Ascending aorta (tissue), 2 donors: ENCODE measurements at regions of chr17 and their contacts with region 1.

Region 1: GRCh38 chr17:55735731-55736405 is 13.2 kb upstream of the TMEM100 start:
- DNase-seq: peak in 1 of 2 donors; percentile 66
- H3K4me3 ChIP-seq: no peak overlapping the region
- H3K27ac ChIP-seq: no peak overlapping the region
- H3K4me1 ChIP-seq: peaks cover 0 to 4% of the 10 kb centered on the region in 2 donors
- H3K27me3 ChIP-seq: no peaks in the 10 kb centered on the region
- CTCF ChIP-seq: peak; percentile 23 to 70 (median 59)

Region 2: DNA sequence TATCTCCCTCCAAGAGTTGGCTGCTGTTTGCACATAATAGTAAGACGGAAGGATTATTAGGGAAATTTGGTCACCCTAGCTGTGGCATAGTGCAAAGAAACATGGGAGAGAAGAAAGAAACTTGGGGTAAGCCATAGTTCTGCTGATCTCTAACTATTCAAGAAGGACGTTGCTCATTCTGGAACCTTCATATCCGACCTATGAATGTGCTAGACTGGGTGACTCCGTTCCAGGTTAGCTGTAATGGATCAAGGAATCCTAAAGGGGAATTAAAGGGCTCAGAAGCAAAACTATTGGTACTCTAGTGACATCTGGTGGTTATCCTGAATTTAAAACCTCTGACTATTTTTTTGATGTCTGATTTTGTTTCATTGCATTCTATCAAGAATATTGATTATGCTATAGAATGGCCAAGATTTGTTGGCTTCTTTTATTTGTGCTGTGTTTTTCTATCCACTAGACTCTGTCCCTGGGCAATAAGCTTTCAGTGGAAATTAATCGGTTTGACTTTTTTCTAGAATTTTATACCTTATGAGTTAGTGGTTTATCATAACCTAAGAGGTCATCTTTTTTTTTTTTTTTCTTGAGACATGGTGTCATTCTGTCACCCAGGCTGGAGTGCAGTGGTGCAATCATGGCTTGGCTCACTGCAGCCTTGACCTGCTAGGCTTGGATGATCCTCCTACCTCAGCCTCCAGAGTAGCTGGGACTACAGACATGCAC is 34.4 kb after region 1 on chr17:
- intact Hi-C with region 1: loop called (anchors 5 kb)
- DNase-seq: no peak
- H3K4me3 ChIP-seq: no peak overlapping the region
- H3K27ac ChIP-seq: no peak overlapping the region
- H3K4me1 ChIP-seq: no peaks in the 10 kb centered on the region
- H3K27me3 ChIP-seq: no peaks in the 10 kb centered on the region
- CTCF ChIP-seq: peak; percentile 36 to 64 (median 47)